ENCODE measurements at regions of chr2 and their contacts with region 1.

Region 1: DNA sequence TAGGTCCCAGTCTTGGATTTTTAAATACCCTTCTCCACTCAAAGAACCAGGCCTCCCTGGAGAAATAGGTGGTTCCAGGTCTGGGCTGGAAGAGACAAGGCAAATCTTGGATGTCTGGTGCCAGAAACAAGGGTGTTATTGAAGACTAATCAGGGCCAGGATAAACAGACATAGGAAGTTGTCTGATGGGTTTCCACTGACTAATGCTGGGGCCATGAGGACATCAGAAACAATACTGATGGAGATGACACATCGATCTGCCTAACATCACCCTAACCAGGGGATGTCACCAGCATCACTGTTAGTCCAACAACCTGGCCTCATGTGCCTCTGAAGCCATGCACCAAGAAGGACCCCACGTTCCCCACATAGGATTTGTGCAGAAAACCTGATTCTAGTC is 42.5 kb upstream of the GLI2 start:
- DNase-seq: no peak
- H3K4me3 ChIP-seq: no peak overlapping the region
- H3K27ac ChIP-seq: no peak overlapping the region
- H3K4me1 ChIP-seq: no peaks in the 10 kb centered on the region
- H3K27me3 ChIP-seq: peaks cover 3% of the 10 kb centered on the region
- CTCF ChIP-seq: no peak
- POLR2A ChIP-seq: no peak

Region 2: GRCh38 chr2:120559401-120559800 is 133.7 kb before region 1 on chr2:
- intact Hi-C with region 1: no loop called
- DNase-seq: no peak
- H3K4me3 ChIP-seq: no peak overlapping the region
- H3K27ac ChIP-seq: no peak overlapping the region
- H3K4me1 ChIP-seq: no peaks in the 10 kb centered on the region
- H3K27me3 ChIP-seq: no peaks in the 10 kb centered on the region
- CTCF ChIP-seq: no peak
- POLR2A ChIP-seq: no peak

Region 3: DNA sequence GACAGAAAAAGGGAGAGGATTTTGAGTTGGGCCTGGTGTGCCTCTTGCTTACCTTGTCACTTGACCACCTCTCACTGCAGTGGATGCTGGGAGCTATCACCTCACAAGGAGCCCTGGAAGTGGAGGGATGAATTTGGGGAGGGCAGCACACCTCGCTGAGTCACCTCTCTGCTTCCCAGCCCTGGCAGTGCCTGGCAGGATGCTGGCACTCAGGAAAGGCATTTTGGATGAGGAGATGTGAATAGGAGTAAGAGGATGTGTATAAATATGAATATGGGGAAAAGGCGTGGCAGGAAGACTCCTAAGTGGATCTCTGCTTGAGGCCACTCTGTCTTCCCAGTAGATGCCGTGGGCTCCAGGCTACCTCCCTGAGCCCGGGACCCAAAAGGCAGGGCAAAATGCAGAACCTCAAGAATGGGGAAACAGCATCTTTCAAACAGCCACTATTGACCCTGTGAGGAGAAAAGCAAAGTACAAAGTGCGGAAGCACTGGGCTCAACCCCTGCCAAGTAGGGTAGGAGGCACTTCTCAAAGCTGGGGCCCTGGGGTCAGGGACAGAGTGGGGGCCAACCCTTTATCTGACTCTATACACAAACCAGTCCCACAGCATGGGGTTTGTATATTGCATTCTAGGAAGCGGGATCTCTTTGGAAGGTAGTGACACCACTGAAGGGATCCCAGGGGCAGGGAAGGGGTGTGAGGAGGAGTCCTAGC is 121.9 kb before region 1 on chr2:
- intact Hi-C with region 1: no loop called
- DNase-seq: no peak
- H3K4me3 ChIP-seq: no peak overlapping the region
- H3K27ac ChIP-seq: no peak overlapping the region
- H3K4me1 ChIP-seq: no peaks in the 10 kb centered on the region
- H3K27me3 ChIP-seq: no peaks in the 10 kb centered on the region
- CTCF ChIP-seq: no peak
- POLR2A ChIP-seq: no peak

Region 4: DNA sequence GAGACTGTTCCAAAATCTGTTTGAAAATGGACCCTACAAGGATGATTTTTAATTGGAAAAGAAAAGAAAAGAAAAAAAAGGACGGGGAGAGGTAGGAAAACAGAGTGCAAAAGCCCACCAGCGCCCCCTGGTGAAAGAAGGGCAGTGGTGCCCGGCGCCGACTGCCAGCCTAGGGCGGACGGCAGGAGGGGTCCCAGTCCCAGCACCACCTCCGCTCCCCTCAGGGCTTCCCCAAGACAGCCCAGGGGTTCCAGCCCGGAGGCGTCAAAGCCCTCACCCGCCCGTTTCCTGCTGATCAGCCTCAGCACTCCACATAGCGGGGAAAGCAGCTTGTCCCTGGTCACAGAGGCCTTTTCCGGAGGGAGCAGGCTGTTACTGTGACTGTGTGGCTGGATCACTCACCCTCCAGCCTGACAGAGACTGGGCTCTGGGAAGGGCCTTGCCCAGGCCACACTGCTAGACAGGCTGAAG is 377.9 kb after region 1 on chr2:
- intact Hi-C with region 1: loop called (anchors 1 kb)
- DNase-seq: peak; percentile 50
- H3K4me3 ChIP-seq: no peak overlapping the region
- H3K27ac ChIP-seq: no peak overlapping the region
- H3K4me1 ChIP-seq: no peaks in the 10 kb centered on the region
- H3K27me3 ChIP-seq: no peaks in the 10 kb centered on the region
- CTCF ChIP-seq: peak; percentile 88 to 98 (median 94)
- POLR2A ChIP-seq: no peak

Region 5: DNA sequence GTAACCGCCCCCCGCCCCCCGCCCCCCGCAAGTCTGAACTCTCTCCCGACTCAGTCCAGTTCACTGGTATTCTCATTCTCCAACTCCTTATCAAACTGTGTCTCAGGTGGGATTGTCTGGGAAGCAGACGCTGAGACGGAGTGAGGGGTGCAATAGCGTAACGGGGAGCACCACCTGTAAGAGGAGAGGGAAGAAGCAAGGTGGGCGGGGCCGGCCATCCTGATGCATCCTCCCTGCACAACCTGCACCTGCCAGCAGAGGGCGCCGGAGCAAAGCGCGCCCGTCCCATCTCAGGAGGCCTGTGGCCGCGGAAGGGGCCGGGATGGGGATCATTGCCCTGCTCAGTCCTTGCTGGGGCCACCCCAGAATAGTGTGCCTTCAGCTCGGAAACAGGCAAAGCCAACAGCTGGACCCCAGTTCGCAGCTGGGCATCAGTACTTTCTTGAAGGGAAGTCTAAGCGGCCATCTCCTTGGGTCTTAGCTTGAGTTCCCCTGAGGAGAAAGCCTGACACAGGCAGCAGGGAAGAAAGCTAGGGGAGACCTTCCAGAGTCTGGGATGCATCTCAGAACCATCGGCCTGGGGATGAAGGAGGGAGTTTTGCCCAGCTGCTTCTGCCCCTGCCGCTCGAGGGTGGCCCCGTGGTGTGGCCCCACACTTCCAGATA is 383.9 kb after region 1 on chr2:
- intact Hi-C with region 1: loop called (anchors 1 kb)
- DNase-seq: peak; percentile 46
- H3K4me3 ChIP-seq: no peak overlapping the region
- H3K27ac ChIP-seq: no peak overlapping the region
- H3K4me1 ChIP-seq: no peaks in the 10 kb centered on the region
- H3K27me3 ChIP-seq: no peaks in the 10 kb centered on the region
- CTCF ChIP-seq: peak; percentile 58 to 85 (median 66)
- POLR2A ChIP-seq: no peak